Heart left ventricle (tissue), 16 donors: ENCODE measurements at regions of chr12 and their contacts with region 1.

Region 1: GRCh38 chr12:26798023-26798422 is 35.0 kb downstream of the ITPR2 start:
- DNase-seq: no peak
- ATAC-seq: peak in 3 of 4 donors; percentile 27 to 59 (median 53)
- H3K4me3 ChIP-seq: no peak overlapping the region
- H3K27ac ChIP-seq: no peak overlapping the region
- H3K4me1 ChIP-seq: peaks cover 0 to 28% (median under 1%) of the 10 kb centered on the region in 12 donors
- H3K27me3 ChIP-seq: no peaks in the 10 kb centered on the region
- CTCF ChIP-seq: no peak
- POLR2A ChIP-seq: no peak

Region 2: DNA sequence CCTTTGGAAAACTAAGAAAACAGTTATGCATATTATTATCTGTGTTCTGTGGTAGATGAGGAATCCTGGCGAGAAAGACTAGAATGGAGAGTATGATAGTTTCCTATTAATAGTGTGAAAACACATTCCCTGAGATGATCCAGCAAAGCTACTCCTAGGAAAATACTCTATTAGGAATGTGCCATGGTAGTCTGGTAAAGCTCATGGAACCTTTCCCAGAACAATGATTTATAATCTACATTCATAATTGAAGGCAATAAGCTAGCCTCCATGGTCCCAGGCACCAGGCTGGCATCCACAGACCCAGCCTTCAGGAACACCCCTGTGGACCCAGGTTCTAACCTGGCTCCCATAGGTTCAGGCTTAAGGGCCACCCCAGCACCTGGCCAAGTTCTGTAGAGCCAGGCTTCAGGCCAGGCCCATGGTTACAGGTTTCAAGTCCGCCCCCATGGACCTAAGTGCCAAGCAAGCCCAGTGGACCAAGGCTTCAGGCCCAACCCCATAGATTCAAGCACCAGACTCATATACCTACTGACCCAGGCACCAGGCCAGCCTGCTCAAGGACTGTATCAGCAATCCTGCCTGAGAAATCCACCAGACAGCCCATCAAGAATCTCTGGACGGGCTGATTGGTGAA is 37.2 kb before region 1 on chr12:
- intact Hi-C with region 1: loop called in 1 of 10 experiments (anchors 5 kb)
- DNase-seq: no peak
- ATAC-seq: no peak
- H3K4me3 ChIP-seq: no peak overlapping the region
- H3K27ac ChIP-seq: peak overlapping the region in 1 of 12 donors; percentile 17
- H3K4me1 ChIP-seq: peaks cover 0 to 10% (median 0%) of the 10 kb centered on the region in 12 donors
- H3K27me3 ChIP-seq: no peaks in the 10 kb centered on the region
- CTCF ChIP-seq: no peak
- POLR2A ChIP-seq: no peak

Region 3: GRCh38 chr12:26783131-26783526 is 14.9 kb before region 1 on chr12:
- intact Hi-C with region 1: no loop called
- DNase-seq: no peak
- ATAC-seq: no peak
- H3K4me3 ChIP-seq: no peak overlapping the region
- H3K27ac ChIP-seq: peak overlapping the region in 1 of 12 donors; percentile 39
- H3K4me1 ChIP-seq: peaks cover 0 to 29% (median 11%) of the 10 kb centered on the region in 12 donors
- H3K27me3 ChIP-seq: no peaks in the 10 kb centered on the region
- CTCF ChIP-seq: no peak
- POLR2A ChIP-seq: no peak